Mammary epithelial cell (primary cell): ENCODE measurements at regions of chrX and their contacts with region 1.

Region 1: GRCh38 chrX:22399437-22400192 is 126.9 kb downstream of the CBLL2 start:
- DNase-seq: peak; percentile 82
- H3K4me3 ChIP-seq: no peak overlapping the region
- H3K27ac ChIP-seq: peak overlapping the region; percentile 78
- H3K4me1 ChIP-seq: peaks cover 10% of the 10 kb centered on the region
- H3K27me3 ChIP-seq: no peaks in the 10 kb centered on the region
- CTCF ChIP-seq: no peak

Region 2: GRCh38 chrX:22748093-22748999 is 348.7 kb after region 1 on chrX:
- CTCF ChIA-PET with region 1: no interaction called
- dilution Hi-C with region 1: no loop called
- in situ Hi-C with region 1: no loop called
- intact Hi-C with region 1: loop called (anchors 5 kb)
- DNase-seq: peak; percentile 25
- H3K4me3 ChIP-seq: no peak overlapping the region
- H3K27ac ChIP-seq: no peak overlapping the region
- H3K4me1 ChIP-seq: no peaks in the 10 kb centered on the region
- H3K27me3 ChIP-seq: peaks cover 4% of the 10 kb centered on the region
- CTCF ChIP-seq: peak; percentile 73 to 84